ENCODE measurements at regions of chr2 and their contacts with region 1.

Region 1: DNA sequence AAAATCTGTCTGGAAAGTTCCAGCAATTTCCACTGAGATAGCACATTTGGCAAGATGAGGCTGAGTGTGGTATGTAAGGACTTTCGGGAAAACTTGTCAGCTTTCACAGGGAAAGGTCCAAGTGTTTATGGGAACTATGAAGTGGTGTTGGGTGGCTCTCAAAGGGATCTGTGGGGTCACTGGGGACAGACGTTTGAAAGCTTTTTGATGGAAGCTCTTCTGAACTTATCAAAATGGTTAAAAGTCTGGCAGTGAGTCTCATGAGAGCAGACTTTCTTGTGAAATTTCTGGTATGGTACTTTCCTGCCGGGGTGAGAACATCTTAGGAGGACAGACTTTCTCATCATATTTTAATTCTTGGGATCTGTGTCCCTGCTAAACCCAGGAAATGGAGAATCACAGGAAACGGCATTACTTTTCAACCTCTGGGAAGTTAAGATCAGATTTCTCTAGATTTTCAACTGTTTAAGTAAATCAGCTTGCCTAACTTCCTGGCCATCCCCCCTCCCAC is 546.3 kb upstream of the ZEB2 start:
- DNase-seq: no peak
- H3K4me3 ChIP-seq: peak overlapping the region in 53 of 59 donors; percentile 6 to 65 (median 36)
- H3K27ac ChIP-seq: peak overlapping the region; percentile 77 to 99 (median 95)
- H3K27me3 ChIP-seq: no peaks in the 10 kb centered on the region
- CTCF ChIP-seq: no peak

Region 2: GRCh38 chr2:144825331-144826020 is 240.7 kb before region 1 on chr2:
- intact Hi-C with region 1: no loop called
- DNase-seq: no peak
- H3K4me3 ChIP-seq: no peak overlapping the region
- H3K27ac ChIP-seq: no peak overlapping the region
- H3K27me3 ChIP-seq: no peaks in the 10 kb centered on the region
- CTCF ChIP-seq: no peak

Region 3: DNA sequence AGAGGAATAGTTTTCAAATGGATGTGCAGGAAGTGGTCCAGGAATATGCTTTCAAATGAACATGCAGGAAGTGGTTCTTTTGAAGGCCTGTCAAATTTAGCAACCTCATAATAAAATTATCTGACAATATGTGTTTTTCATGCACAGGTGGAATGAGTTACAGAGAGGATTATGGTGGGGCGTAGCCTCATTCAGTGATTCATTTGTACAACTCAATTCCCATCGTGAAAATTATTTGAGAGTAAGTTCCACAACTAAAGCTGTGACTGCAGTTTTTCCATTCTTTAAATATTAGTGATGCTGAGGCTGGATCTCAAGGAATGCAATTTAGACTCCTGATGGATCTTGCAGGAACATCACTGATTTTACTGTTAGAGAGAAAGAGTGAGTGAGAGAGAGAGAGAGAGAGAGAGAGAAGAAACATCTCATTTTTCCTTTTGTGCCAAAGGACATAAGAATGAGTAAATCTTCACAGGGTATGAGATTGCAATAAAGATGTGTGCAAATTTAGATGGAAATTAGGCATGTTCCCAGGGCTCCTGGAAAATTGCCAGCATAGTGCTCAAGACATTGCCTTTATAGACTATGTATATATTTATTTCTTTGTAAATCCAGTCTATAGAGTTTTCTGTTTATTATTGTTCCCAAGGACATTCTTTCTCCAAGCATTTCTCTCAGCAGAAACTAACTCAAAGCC is 151.4 kb before region 1 on chr2:
- intact Hi-C with region 1: no loop called
- DNase-seq: no peak
- H3K4me3 ChIP-seq: no peak overlapping the region
- H3K27ac ChIP-seq: no peak overlapping the region
- H3K27me3 ChIP-seq: no peaks in the 10 kb centered on the region
- CTCF ChIP-seq: no peak

Region 4: DNA sequence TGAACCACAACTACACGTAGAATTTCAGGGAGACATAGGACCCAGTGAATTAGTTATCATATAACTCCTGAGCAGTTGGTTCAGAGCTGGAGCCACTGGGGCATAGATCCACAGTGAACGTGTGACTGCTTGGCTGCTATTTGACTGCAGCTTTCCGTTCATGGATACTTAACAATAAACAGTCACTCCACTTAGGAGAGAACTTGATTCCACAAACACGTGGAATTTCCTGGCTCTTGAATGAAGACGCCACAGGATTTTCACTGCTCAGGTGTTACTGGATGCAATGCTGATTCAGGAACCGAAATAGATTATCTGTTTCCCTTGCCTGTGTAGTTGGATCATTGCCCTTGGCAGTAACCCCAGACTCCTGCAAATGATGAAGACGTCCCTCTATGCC is 132.8 kb after region 1 on chr2:
- intact Hi-C with region 1: loop called (anchors 5 to 10 kb)
- DNase-seq: peak in 1 of 10 donors; percentile 29
- H3K4me3 ChIP-seq: peak overlapping the region in 10 of 59 donors; percentile 3 to 35 (median 10)
- H3K27ac ChIP-seq: peak overlapping the region in 3 of 59 donors; percentile 5 to 14 (median 10)
- H3K27me3 ChIP-seq: no peaks in the 10 kb centered on the region
- CTCF ChIP-seq: no peak